ENCODE measurements at regions of chr11 and their contacts with region 1.

Region 1: GRCh38 chr11:83156150-83156995 is 558 bp upstream of the PCF11 start:
- DNase-seq: peak; percentile 94 to 99 (median 99)
- H3K4me3 ChIP-seq: peak overlapping the region; percentile 94 to 96
- H3K4me3 Mint-ChIP-seq: peak overlapping the region; percentile 99 to 100 (median 100)
- H3K27ac ChIP-seq: peak overlapping the region; percentile 98
- H3K27ac Mint-ChIP-seq: peak overlapping the region; percentile 99 to 100 (median 100)
- H3K4me1 ChIP-seq: peaks cover 23% of the 10 kb centered on the region
- H3K4me1 Mint-ChIP-seq: peaks cover 17 to 45% (median 28%) of the 10 kb centered on the region in 4 donors
- H3K27me3 ChIP-seq: no peaks in the 10 kb centered on the region
- H3K27me3 Mint-ChIP-seq: no peaks in the 10 kb centered on the region

Region 2: DNA sequence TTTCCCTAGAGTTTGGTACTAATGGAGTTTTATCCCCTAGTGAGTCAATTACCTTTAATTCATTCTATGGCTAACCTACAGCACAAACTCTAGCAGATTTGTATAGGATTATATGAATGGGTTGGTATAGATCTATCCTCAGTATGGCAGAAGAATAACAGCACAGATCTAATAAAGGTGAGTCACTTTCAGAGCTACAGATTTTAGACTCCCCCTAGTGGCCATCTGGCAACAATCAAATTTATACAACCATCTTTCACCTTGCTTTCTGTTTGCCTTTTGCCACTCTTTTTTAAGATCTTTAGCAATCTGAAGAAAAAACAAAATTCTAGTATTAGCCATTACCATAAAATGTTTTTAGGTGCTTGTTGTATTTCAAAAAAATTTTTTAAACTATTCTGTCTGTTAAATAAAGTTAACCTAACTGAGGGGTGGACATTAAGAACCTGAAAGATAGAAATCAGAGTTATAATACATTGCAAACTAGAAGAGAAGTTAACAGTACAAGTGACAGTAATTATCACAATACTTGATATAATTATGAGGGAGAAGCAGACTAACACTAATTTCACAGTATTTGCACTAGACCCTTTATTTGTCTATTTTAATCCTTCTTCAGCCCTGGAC is 229.0 kb before region 1 on chr11:
- CTCF ChIA-PET with region 1: interaction called, 3 read pairs
- POLR2A ChIA-PET with region 1: interaction called, 22 read pairs
- intact Hi-C with region 1: no loop called
- DNase-seq: peak; percentile 50 to 71 (median 65)
- H3K4me3 ChIP-seq: no peak overlapping the region
- H3K4me3 Mint-ChIP-seq: no peak overlapping the region
- H3K27ac ChIP-seq: no peak overlapping the region
- H3K27ac Mint-ChIP-seq: peak overlapping the region in 2 of 7 donors; percentile 2 to 57
- H3K4me1 ChIP-seq: peaks cover 8% of the 10 kb centered on the region
- H3K4me1 Mint-ChIP-seq: peaks cover 16 to 22% (median 18%) of the 10 kb centered on the region in 4 donors
- H3K27me3 ChIP-seq: no peaks in the 10 kb centered on the region
- H3K27me3 Mint-ChIP-seq: no peaks in the 10 kb centered on the region

Region 3: GRCh38 chr11:83063073-83063754 is 93.2 kb before region 1 on chr11:
- CTCF ChIA-PET with region 1: interaction called, 6 read pairs
- POLR2A ChIA-PET with region 1: interaction called, 29 read pairs
- intact Hi-C with region 1: no loop called
- DNase-seq: peak in 4 of 5 donors; percentile 27 to 40 (median 30)
- H3K4me3 ChIP-seq: peak overlapping the region; percentile 0 to 46
- H3K4me3 Mint-ChIP-seq: peak overlapping the region; percentile 83 to 91 (median 86)
- H3K27ac ChIP-seq: peak overlapping the region; percentile 11
- H3K27ac Mint-ChIP-seq: peak overlapping the region; percentile 43 to 96 (median 92)
- H3K4me1 ChIP-seq: peaks cover 22% of the 10 kb centered on the region
- H3K4me1 Mint-ChIP-seq: peaks cover 16 to 29% (median 21%) of the 10 kb centered on the region in 4 donors
- H3K27me3 ChIP-seq: no peaks in the 10 kb centered on the region
- H3K27me3 Mint-ChIP-seq: no peaks in the 10 kb centered on the region

Region 4: GRCh38 chr11:83115551-83115950 is 40.8 kb before region 1 on chr11:
- CTCF ChIA-PET with region 1: interaction called, 8 read pairs
- POLR2A ChIA-PET with region 1: interaction called, 92 read pairs
- intact Hi-C with region 1: loop called (anchors 1 kb)
- DNase-seq: no peak
- H3K4me3 ChIP-seq: no peak overlapping the region
- H3K4me3 Mint-ChIP-seq: peak overlapping the region; percentile 25 to 81 (median 64)
- H3K27ac ChIP-seq: no peak overlapping the region
- H3K27ac Mint-ChIP-seq: peak overlapping the region in 4 of 7 donors; percentile 54 to 84 (median 75)
- H3K4me1 ChIP-seq: peaks cover 44% of the 10 kb centered on the region
- H3K4me1 Mint-ChIP-seq: peaks cover 33 to 54% (median 34%) of the 10 kb centered on the region in 4 donors
- H3K27me3 ChIP-seq: no peaks in the 10 kb centered on the region
- H3K27me3 Mint-ChIP-seq: peaks cover 0 to 1% of the 10 kb centered on the region in 2 donors

Region 5: DNA sequence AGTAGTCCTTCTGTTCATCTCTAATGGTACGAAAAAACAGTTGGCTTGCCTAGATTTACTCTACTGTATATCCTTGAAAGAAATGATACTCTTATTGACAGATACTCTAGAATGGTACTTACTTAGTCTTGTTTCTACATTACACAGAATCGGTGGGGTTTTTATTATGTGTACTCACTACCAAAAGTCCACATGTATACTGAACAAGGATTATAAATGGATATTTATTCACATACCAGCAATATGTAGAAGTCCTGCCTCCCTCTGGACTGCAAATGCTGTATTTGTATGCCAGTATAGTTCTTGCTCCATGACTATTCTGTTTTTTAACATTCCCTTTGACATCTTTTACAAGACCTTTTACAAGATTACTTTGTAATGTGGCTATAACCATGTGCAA is 14.5 kb after region 1 on chr11:
- CTCF ChIA-PET with region 1: interaction called, 3 read pairs
- POLR2A ChIA-PET with region 1: interaction called, 32 read pairs
- intact Hi-C with region 1: loop called (anchors 2 kb)
- DNase-seq: no peak
- H3K4me3 ChIP-seq: peak overlapping the region in 1 of 2 donors; percentile 7
- H3K4me3 Mint-ChIP-seq: peak overlapping the region; percentile 71 to 85 (median 82)
- H3K27ac ChIP-seq: peak overlapping the region; percentile 22
- H3K27ac Mint-ChIP-seq: peak overlapping the region in 3 of 7 donors; percentile 13 to 68 (median 50)
- H3K4me1 ChIP-seq: peaks cover 96% of the 10 kb centered on the region
- H3K4me1 Mint-ChIP-seq: peaks cover 52 to 94% (median 79%) of the 10 kb centered on the region in 4 donors
- H3K27me3 ChIP-seq: no peaks in the 10 kb centered on the region
- H3K27me3 Mint-ChIP-seq: no peaks in the 10 kb centered on the region

Region 6: DNA sequence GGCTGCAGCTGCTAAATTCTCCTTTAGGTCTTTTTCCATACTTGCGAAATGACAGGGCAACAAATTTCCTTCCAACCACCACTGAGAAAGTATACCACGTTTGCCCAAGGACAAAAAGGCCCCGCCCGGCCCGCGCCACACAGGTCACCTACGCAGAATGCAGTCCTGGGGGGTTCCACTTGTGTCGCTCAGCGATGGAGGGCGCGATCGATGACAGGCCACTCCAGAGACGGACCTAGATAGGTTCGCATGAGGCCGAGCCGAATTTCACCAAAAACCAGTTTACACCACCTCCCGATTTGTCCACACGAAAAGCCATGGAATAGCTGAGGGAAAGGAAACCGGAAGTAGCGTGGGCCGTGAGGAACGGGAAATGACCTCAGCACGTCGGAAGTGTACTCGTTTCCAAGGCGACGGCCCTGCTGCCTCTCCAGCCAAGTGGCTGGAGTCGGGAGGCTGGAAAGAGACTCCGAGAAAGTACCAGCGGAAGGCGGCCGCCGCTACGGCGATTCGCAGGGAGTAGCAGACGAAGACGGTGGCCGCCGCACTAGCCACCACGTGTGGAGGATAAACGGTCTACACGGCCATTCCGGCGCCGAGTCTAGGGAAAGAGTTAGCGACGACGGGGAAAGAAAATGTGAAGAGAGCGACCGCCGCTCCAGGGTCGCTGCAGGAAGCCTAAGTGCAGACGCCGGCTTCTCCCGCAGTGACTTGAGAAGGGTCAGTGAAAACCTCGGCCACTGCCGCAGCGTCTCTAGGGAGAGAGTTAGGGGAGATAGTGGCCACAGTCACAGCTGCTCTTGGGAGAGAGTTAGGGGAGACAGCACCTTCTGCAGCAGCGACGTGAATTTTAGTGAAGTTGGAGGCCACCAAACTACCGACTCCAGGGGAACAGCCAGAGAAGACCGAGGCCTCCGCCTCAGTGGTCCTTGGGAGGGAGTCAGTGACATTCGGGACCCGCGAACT is 37.2 kb after region 1 on chr11 and contains the start of gene ANKRD42:
- CTCF ChIA-PET with region 1: no interaction called
- POLR2A ChIA-PET with region 1: interaction called, 95 read pairs
- intact Hi-C with region 1: loop called (anchors 1 kb)
- DNase-seq: peak; percentile 88 to 92 (median 90)
- H3K4me3 ChIP-seq: peak within 1 kb of the TSS; percentile 90 to 99
- H3K4me3 Mint-ChIP-seq: peak within 1 kb of the TSS; percentile 98 to 100 (median 99)
- H3K27ac ChIP-seq: peak within 1 kb of the TSS; percentile 99
- H3K27ac Mint-ChIP-seq: peak within 1 kb of the TSS; percentile 99 to 100 (median 100)
- H3K4me1 ChIP-seq: peaks cover 39% of the 10 kb centered on the region
- H3K4me1 Mint-ChIP-seq: peaks cover 35 to 53% (median 41%) of the 10 kb centered on the region in 4 donors
- H3K27me3 ChIP-seq: no peaks in the 10 kb centered on the region
- H3K27me3 Mint-ChIP-seq: no peaks in the 10 kb centered on the region
- total RNA-seq, gene ANKRD42: 8.9 to 12.4 TPM

Region 7: DNA sequence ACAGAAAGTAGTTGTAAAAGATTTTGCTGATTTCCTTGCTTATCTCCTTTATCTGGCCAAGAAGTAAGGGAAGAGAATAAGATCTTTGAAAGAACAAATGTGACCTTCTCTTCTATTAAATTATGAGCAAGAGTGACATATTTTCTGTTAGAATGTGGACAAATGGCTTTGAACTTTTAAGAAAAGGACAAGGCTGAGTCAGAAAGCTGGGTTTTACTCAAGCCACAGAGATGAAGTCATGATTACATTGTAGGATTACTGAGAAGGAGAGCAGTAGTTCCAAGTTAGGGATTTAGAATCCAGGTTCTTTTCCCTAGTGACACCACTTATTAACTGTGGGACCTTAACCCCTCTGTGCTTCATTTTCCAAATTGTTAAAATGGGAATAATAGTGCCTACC is 116.3 kb after region 1 on chr11:
- CTCF ChIA-PET with region 1: no interaction called
- POLR2A ChIA-PET with region 1: no interaction called
- intact Hi-C with region 1: no loop called
- DNase-seq: no peak
- H3K4me3 ChIP-seq: no peak overlapping the region
- H3K4me3 Mint-ChIP-seq: no peak overlapping the region
- H3K27ac ChIP-seq: no peak overlapping the region
- H3K27ac Mint-ChIP-seq: no peak overlapping the region
- H3K4me1 ChIP-seq: no peaks in the 10 kb centered on the region
- H3K4me1 Mint-ChIP-seq: peaks cover 17 to 21% (median 19%) of the 10 kb centered on the region in 4 donors
- H3K27me3 ChIP-seq: no peaks in the 10 kb centered on the region
- H3K27me3 Mint-ChIP-seq: no peaks in the 10 kb centered on the region